ENCODE measurements at regions of chr15 and their contacts with region 1.

Region 1: GRCh38 chr15:54520616-54521015 is 542.4 kb downstream of the UNC13C start:
- DNase-seq: no peak
- ATAC-seq: no peak
- H3K4me3 ChIP-seq: no peak overlapping the region
- H3K27ac ChIP-seq: peak overlapping the region in 1 of 12 donors; percentile 61
- H3K4me1 ChIP-seq: peaks cover 0 to 23% (median 0%) of the 10 kb centered on the region in 12 donors
- H3K27me3 ChIP-seq: no peaks in the 10 kb centered on the region
- CTCF ChIP-seq: no peak
- POLR2A ChIP-seq: no peak

Region 2: DNA sequence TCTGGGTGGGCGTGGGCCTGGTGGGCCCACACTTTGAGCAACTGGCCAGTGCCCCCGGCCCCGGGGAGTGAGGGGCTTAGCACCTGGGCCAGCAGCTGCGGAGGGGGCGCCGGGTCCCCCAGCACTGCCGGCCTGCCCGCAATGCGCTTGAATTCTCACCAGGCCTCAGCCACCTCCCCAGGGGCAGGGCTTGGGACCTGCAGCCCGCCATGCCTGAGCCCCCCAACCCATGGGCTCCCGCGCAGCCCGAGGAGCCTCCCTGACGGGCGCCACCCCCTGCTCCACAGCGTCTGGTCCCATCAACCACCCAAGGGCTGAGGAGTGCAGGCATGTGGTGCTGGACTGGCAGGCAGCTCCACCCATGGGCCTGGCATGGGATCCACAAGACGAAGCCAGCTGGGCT is 58.1 kb before region 1 on chr15:
- intact Hi-C with region 1: loop called in 1 of 10 experiments (anchors 10 kb)
- DNase-seq: no peak
- ATAC-seq: no peak
- H3K4me3 ChIP-seq: no peak overlapping the region
- H3K27ac ChIP-seq: no peak overlapping the region
- H3K4me1 ChIP-seq: no peaks in the 10 kb centered on the region
- H3K27me3 ChIP-seq: no peaks in the 10 kb centered on the region
- CTCF ChIP-seq: no peak
- POLR2A ChIP-seq: no peak